CD4-positive, alpha-beta memory T cell (primary cell): ENCODE measurements at regions of chrX and their contacts with region 1.

Region 1: DNA sequence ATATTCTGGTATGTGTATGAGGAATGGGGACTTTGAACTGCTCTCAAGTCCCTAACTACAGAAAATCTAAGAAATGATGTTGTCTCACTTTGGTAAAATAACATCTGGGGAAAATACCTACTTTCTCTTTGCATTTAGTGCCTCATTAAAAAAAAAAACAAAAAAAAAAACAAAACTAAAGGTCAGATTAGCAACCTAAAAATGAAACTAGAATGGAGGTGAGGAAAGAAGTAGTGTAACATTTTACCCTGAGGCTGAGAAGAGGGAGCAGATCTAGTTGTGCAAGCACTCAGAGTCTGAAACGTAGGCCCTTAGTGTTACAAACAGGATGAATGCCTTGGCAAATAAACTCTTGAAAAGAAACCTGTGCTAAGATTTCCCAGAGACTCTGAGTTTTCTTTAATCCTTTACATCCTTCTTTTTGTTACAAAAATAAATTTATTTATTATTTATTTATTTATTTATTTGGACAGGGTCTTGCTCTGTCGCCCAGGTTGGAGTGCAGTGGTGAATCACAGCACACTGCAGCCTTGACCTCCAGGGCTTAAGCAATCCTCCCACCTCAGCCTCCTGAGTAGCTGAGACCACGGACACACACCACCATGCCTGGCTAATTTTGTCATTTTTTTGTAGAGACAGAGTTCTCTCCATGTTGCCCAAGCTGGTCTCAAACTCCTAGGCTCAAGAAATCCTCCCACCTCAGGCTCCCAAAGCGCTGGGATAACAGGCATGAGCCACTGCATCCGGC is 56.2 kb downstream of the VGLL1 start:
- DNase-seq: peak in 4 of 5 donors; percentile 26 to 54 (median 38)
- H3K4me3 ChIP-seq: no peak overlapping the region
- H3K4me3 Mint-ChIP-seq: peak overlapping the region in 7 of 8 donors; percentile 24 to 86 (median 49)
- H3K27ac ChIP-seq: peak overlapping the region; percentile 71
- H3K27ac Mint-ChIP-seq: peak overlapping the region; percentile 90 to 97 (median 93)
- H3K4me1 ChIP-seq: peaks cover 69% of the 10 kb centered on the region
- H3K4me1 Mint-ChIP-seq: peaks cover 40 to 70% (median 53%) of the 10 kb centered on the region in 4 donors
- H3K27me3 ChIP-seq: no peaks in the 10 kb centered on the region
- H3K27me3 Mint-ChIP-seq: no peaks in the 10 kb centered on the region

Region 2: GRCh38 chrX:136598631-136599030 is 10.4 kb after region 1 on chrX:
- CTCF ChIA-PET with region 1: interaction called, 5 read pairs
- POLR2A ChIA-PET with region 1: interaction called, 26 read pairs
- intact Hi-C with region 1: no loop called
- DNase-seq: peak in 2 of 5 donors; percentile 50 to 68
- H3K4me3 ChIP-seq: no peak overlapping the region
- H3K4me3 Mint-ChIP-seq: peak overlapping the region; percentile 54 to 87 (median 68)
- H3K27ac ChIP-seq: peak overlapping the region; percentile 40
- H3K27ac Mint-ChIP-seq: peak overlapping the region; percentile 81 to 94 (median 92)
- H3K4me1 ChIP-seq: peaks cover 54% of the 10 kb centered on the region
- H3K4me1 Mint-ChIP-seq: peaks cover 30 to 62% (median 46%) of the 10 kb centered on the region in 4 donors
- H3K27me3 ChIP-seq: no peaks in the 10 kb centered on the region
- H3K27me3 Mint-ChIP-seq: no peaks in the 10 kb centered on the region

Region 3: GRCh38 chrX:137234661-137235402 is 646.6 kb after region 1 on chrX:
- CTCF ChIA-PET with region 1: no interaction called
- POLR2A ChIA-PET with region 1: no interaction called
- intact Hi-C with region 1: no loop called
- DNase-seq: peak in 2 of 5 donors; percentile 2 to 6
- H3K4me3 ChIP-seq: no peak overlapping the region
- H3K4me3 Mint-ChIP-seq: peak overlapping the region in 5 of 8 donors; percentile 6 to 71 (median 46)
- H3K27ac ChIP-seq: no peak overlapping the region
- H3K27ac Mint-ChIP-seq: peak overlapping the region in 4 of 7 donors; percentile 3 to 63 (median 28)
- H3K4me1 ChIP-seq: peaks cover 7% of the 10 kb centered on the region
- H3K4me1 Mint-ChIP-seq: peaks cover 0 to 17% (median 11%) of the 10 kb centered on the region in 4 donors
- H3K27me3 ChIP-seq: no peaks in the 10 kb centered on the region
- H3K27me3 Mint-ChIP-seq: no peaks in the 10 kb centered on the region